ENCODE measurements at regions of chr14 and their contacts with region 1.

Region 1: DNA sequence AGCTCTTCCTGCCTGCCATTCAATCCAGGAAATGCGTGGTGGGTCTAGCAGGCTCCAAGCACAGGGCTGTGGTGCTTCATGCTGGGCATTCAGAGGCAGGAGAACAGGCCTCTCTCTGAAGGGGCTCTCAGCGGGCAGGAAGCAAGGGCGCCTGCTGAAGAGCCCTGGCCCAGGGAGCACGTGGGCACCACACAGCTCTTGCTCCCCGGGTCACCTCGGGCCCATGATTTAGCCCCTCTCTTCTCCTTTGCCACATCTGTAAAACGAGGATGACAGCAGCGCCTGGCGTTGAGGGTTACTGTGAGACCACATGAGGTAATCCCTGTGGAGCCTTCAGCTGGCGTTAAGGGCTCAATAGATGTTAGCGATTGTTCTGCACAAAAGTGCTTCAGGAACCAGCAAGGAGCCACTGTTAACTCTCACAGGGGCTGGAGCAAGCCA is 37.6 kb upstream of the SPTLC2 start:
- DNase-seq: no peak
- H3K27ac ChIP-seq: no peak overlapping the region
- CTCF ChIP-seq: no peak

Region 2: DNA sequence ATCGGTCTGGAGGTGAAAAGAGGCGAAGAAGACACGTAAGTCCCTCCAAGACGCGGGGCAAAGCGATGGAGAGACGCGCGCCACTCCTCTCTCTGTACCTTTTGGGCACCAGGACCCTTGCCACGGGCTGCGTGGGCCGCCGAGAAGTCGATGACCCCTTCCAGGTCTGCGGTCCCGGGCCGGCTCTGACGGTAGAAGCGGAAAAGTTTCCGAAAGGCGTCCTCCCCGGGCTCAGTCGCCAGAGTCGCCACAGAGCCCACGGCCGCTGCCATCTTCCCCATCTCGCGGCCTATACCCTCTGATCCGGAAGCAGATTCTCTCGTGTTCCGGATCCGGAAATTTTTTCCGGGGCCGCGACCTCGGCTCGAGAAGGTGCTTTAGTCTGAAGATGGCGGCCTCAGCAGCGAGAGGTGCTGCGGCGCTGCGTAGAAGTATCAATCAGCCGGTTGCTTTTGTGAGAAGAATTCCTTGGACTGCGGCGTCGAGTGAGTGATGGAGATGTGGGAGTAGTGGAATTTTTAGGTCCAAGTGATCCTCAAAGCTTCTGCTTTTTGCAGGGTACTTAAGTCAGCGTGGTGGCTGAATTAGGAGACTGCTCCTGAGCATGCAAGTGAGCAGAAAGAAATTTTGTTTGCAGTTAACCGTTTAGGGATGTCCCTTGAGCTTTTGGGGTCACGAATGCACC is 53.8 kb after region 1 on chr14 and contains the starts of genes ALKBH1 and SLIRP:
- CTCF ChIA-PET with region 1: interaction called, 3 read pairs
- POLR2A ChIA-PET with region 1: interaction called, 13 read pairs
- DNase-seq: peak; percentile 89
- H3K27ac ChIP-seq: peak within 1 kb of the TSS; percentile 63
- CTCF ChIP-seq: no peak

Measured in RWPE1 (cell line).